B cell (primary cell): ENCODE measurements at regions of chr22 and their contacts with region 1.

Region 1: DNA sequence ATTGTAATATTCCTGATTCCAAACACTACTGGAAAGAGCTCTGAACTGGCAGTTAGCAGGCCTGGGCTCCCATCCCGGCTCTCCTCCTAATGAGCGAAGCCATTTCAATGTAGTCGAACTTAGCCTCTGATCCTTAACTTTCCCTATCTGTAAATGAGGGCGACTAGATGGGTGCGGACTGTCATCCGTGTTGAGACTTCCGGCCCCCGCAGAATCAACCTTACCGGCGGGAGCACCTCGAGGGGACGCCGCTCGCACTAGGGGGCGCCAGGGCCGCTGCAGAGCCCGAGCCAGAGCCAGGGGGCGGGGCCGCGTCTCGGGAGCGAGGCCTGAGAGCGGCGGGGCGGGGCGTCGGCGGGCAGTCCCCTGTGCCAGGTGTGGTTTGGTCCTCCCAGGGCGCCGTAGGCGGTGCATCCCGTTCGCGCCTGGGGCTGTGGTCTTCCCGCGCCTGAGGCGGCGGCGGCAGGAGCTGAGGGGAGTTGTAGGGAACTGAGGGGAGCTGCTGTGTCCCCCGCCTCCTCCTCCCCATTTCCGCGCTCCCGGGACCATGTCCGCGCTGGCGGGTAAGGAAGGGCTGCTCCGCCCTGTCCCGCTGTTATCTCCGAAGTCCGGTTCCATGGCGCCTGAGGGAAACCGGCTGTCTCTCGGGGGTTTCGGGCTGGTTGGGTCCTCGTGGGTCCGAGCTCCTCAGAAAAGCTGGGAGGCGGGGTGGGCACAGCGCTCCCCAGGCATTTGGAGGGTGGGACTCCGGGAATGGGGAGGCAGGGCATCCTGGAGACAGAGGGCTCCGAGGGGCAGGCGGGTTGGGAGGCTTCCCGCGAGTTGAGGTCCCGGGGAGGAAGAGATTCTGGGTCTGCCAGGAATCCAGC is at the start of gene LIMK2:
- DNase-seq: peak; percentile 96
- ATAC-seq: peak; percentile 100
- H3K4me3 ChIP-seq: peak within 1 kb of the TSS; percentile 76 to 97 (median 80)
- H3K4me3 Mint-ChIP-seq: peak within 1 kb of the TSS; percentile 89
- H3K27ac ChIP-seq: peak within 1 kb of the TSS; percentile 57 to 81
- H3K27ac Mint-ChIP-seq: peak within 1 kb of the TSS; percentile 89
- H3K4me1 ChIP-seq: peaks cover 23 to 29% of the 10 kb centered on the region in 2 donors
- H3K4me1 Mint-ChIP-seq: peaks cover 36% of the 10 kb centered on the region
- H3K27me3 ChIP-seq: no peaks in the 10 kb centered on the region
- H3K27me3 Mint-ChIP-seq: no peaks in the 10 kb centered on the region
- CTCF ChIP-seq: peak; percentile 89
- total RNA-seq, gene LIMK2: 16.3 and 20.2 TPM in 2 replicates

Region 2: GRCh38 chr22:30717331-30717921 is 494.7 kb before region 1 on chr22:
- CTCF ChIA-PET with region 1: no interaction called
- POLR2A ChIA-PET with region 1: no interaction called
- intact Hi-C with region 1: no loop called
- DNase-seq: no peak
- ATAC-seq: no peak
- H3K4me3 ChIP-seq: no peak overlapping the region
- H3K4me3 Mint-ChIP-seq: no peak overlapping the region
- H3K27ac ChIP-seq: no peak overlapping the region
- H3K27ac Mint-ChIP-seq: no peak overlapping the region
- H3K4me1 ChIP-seq: no peaks in the 10 kb centered on the region
- H3K4me1 Mint-ChIP-seq: no peaks in the 10 kb centered on the region
- H3K27me3 ChIP-seq: no peaks in the 10 kb centered on the region
- H3K27me3 Mint-ChIP-seq: no peaks in the 10 kb centered on the region
- CTCF ChIP-seq: no peak

Region 3: GRCh38 chr22:31055635-31056159 is 156.4 kb before region 1 on chr22:
- CTCF ChIA-PET with region 1: no interaction called
- POLR2A ChIA-PET with region 1: no interaction called
- intact Hi-C with region 1: no loop called
- DNase-seq: no peak
- ATAC-seq: no peak
- H3K4me3 ChIP-seq: no peak overlapping the region
- H3K4me3 Mint-ChIP-seq: no peak overlapping the region
- H3K27ac ChIP-seq: no peak overlapping the region
- H3K27ac Mint-ChIP-seq: no peak overlapping the region
- H3K4me1 ChIP-seq: no peaks in the 10 kb centered on the region
- H3K4me1 Mint-ChIP-seq: no peaks in the 10 kb centered on the region
- H3K27me3 ChIP-seq: peaks cover 0 to 2% (median 0%) of the 10 kb centered on the region in 4 experiments
- H3K27me3 Mint-ChIP-seq: no peaks in the 10 kb centered on the region
- CTCF ChIP-seq: no peak

Region 4: GRCh38 chr22:31080848-31081649 is 131.0 kb before region 1 on chr22 and contains the start of gene SMTN:
- CTCF ChIA-PET with region 1: interaction called, 8 read pairs
- POLR2A ChIA-PET with region 1: no interaction called
- intact Hi-C with region 1: loop called (anchors 2 kb)
- DNase-seq: peak; percentile 93
- ATAC-seq: peak; percentile 77
- H3K4me3 ChIP-seq: peak within 1 kb of the TSS; percentile 8 to 75 (median 67)
- H3K4me3 Mint-ChIP-seq: peak within 1 kb of the TSS; percentile 92
- H3K27ac ChIP-seq: no peak within 1 kb of the TSS
- H3K27ac Mint-ChIP-seq: peak within 1 kb of the TSS; percentile 58
- H3K4me1 ChIP-seq: peaks cover 22 to 50% of the 10 kb centered on the region in 2 donors
- H3K4me1 Mint-ChIP-seq: peaks cover 34% of the 10 kb centered on the region
- H3K27me3 ChIP-seq: no peaks in the 10 kb centered on the region
- H3K27me3 Mint-ChIP-seq: no peaks in the 10 kb centered on the region
- CTCF ChIP-seq: no peak
- total RNA-seq, gene SMTN: 4.0 and 4.7 TPM in 2 replicates

Region 5: DNA sequence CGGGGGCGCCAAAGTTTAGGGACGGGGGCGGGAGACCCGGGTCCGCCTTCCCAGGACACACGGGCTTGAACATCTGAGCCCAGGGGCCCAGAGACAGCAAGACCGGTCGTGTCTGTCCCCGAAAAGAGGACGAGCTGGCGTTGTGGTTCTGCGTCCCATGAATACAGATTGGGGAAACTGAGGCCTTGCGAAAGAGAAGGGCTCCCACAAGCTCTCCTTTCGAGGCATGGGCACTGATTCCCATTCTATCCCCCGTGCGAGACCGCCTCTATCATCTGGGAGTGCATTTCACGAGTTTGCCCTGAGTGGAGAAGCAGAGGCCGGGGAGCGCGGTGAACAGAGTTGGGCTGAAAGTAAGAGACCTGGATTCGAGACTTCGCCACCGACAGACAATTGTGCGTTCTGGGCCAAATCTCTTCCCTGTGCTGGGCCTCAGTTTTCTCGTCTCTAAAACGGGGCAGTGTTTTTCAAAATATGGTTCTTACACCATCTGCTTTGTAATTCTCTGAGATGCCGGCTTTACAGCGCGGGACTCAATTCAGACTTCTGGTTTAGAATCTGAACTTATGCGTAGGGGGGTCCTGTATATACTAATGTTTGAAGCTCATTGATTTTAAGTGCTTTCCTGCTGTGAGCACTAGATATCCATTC is 51.6 kb before region 1 on chr22:
- CTCF ChIA-PET with region 1: interaction called, 4 read pairs
- POLR2A ChIA-PET with region 1: no interaction called
- intact Hi-C with region 1: loop called (anchors 1 kb)
- DNase-seq: no peak
- ATAC-seq: peak; percentile 29
- H3K4me3 ChIP-seq: peak overlapping the region; percentile 65 to 81 (median 74)
- H3K4me3 Mint-ChIP-seq: peak overlapping the region; percentile 95
- H3K27ac ChIP-seq: peak overlapping the region; percentile 82 to 83
- H3K27ac Mint-ChIP-seq: peak overlapping the region; percentile 95
- H3K4me1 ChIP-seq: peaks cover 19 to 24% of the 10 kb centered on the region in 2 donors
- H3K4me1 Mint-ChIP-seq: peaks cover 33% of the 10 kb centered on the region
- H3K27me3 ChIP-seq: peaks cover 0 to 2% (median 0%) of the 10 kb centered on the region in 4 experiments
- H3K27me3 Mint-ChIP-seq: no peaks in the 10 kb centered on the region
- CTCF ChIP-seq: no peak

Region 6: GRCh38 chr22:31230871-31231621 is 18.9 kb after region 1 on chr22:
- CTCF ChIA-PET with region 1: interaction called, 56 read pairs
- POLR2A ChIA-PET with region 1: no interaction called
- intact Hi-C with region 1: loop called (anchors 1 kb)
- DNase-seq: peak; percentile 71
- ATAC-seq: peak; percentile 56
- H3K4me3 ChIP-seq: no peak overlapping the region
- H3K4me3 Mint-ChIP-seq: no peak overlapping the region
- H3K27ac ChIP-seq: no peak overlapping the region
- H3K27ac Mint-ChIP-seq: peak overlapping the region; percentile 32
- H3K4me1 ChIP-seq: peaks cover 17 to 19% of the 10 kb centered on the region in 2 donors
- H3K4me1 Mint-ChIP-seq: peaks cover 25% of the 10 kb centered on the region
- H3K27me3 ChIP-seq: no peaks in the 10 kb centered on the region
- H3K27me3 Mint-ChIP-seq: no peaks in the 10 kb centered on the region
- CTCF ChIP-seq: peak; percentile 72

Region 7: DNA sequence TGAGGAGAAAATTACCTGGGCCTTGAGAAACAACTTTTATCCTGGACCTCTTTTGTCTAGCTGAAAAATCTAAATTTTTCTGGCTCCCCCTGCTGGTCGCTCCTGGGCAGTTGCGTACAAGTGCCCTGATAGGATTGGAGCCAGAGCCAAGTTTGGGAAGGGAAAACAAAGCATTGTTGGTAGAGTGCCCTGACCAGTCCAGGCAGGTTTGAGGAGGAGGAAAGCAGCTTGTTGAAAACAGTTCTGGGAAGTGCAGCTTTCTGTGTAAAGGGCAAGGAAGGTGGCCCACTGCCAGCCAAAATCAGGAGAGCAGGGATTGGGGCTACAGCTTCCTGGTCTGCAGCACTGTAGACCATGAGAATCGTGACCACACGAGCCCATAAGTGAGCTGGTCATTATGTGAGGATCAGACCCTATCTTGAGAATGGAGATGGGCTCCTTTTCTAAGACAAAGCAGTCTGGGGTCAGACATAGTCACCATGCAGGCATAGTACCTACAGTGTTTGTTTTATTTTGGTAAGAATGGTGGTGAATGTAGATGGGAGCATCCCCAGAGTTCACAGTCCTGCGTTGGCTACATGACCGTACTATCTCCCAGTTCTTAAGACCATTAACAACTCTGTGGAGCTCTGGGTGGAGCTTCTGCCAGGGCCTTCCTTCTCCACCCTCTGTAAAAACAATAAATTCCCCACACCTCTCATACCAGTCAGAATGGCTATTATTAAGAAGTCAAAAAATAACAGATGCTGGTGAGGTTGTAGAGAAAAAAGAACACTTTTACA is 101.5 kb after region 1 on chr22:
- CTCF ChIA-PET with region 1: interaction called, 35 read pairs
- POLR2A ChIA-PET with region 1: no interaction called
- intact Hi-C with region 1: loop called (anchors 1 kb)
- DNase-seq: peak; percentile 68
- ATAC-seq: peak; percentile 64
- H3K4me3 ChIP-seq: no peak overlapping the region
- H3K4me3 Mint-ChIP-seq: no peak overlapping the region
- H3K27ac ChIP-seq: no peak overlapping the region
- H3K27ac Mint-ChIP-seq: no peak overlapping the region
- H3K4me1 ChIP-seq: peaks cover 2 to 7% of the 10 kb centered on the region in 2 donors
- H3K4me1 Mint-ChIP-seq: peaks cover 10% of the 10 kb centered on the region
- H3K27me3 ChIP-seq: no peaks in the 10 kb centered on the region
- H3K27me3 Mint-ChIP-seq: no peaks in the 10 kb centered on the region
- CTCF ChIP-seq: peak; percentile 94

Region 8: GRCh38 chr22:31489604-31490495 is 277.8 kb after region 1 on chr22 and contains the start of gene EIF4ENIF1:
- CTCF ChIA-PET with region 1: no interaction called
- POLR2A ChIA-PET with region 1: no interaction called
- intact Hi-C with region 1: loop called (anchors 5 kb)
- DNase-seq: peak; percentile 93
- ATAC-seq: peak; percentile 67
- H3K4me3 ChIP-seq: peak within 1 kb of the TSS; percentile 67 to 100 (median 84)
- H3K4me3 Mint-ChIP-seq: peak within 1 kb of the TSS; percentile 91
- H3K27ac ChIP-seq: peak within 1 kb of the TSS; percentile 93 to 99
- H3K27ac Mint-ChIP-seq: peak within 1 kb of the TSS; percentile 98
- H3K4me1 ChIP-seq: peaks cover 29 to 47% of the 10 kb centered on the region in 2 donors
- H3K4me1 Mint-ChIP-seq: peaks cover 52% of the 10 kb centered on the region
- H3K27me3 ChIP-seq: no peaks in the 10 kb centered on the region
- H3K27me3 Mint-ChIP-seq: no peaks in the 10 kb centered on the region
- CTCF ChIP-seq: no peak
- total RNA-seq, gene EIF4ENIF1: 58.3 and 62.7 TPM in 2 replicates